BJ (cell line): ENCODE measurements at regions of chr6 and their contacts with region 1.

Region 1: GRCh38 chr6:166775180-166776081 is 148.4 kb upstream of the RPS6KA2 start:
- DNase-seq: no peak
- H3K4me3 ChIP-seq: no peak overlapping the region
- H3K27me3 ChIP-seq: no peaks in the 10 kb centered on the region; the same call in 1 of the 2 replicates
- CTCF ChIP-seq: peak; percentile 95

Region 2: DNA sequence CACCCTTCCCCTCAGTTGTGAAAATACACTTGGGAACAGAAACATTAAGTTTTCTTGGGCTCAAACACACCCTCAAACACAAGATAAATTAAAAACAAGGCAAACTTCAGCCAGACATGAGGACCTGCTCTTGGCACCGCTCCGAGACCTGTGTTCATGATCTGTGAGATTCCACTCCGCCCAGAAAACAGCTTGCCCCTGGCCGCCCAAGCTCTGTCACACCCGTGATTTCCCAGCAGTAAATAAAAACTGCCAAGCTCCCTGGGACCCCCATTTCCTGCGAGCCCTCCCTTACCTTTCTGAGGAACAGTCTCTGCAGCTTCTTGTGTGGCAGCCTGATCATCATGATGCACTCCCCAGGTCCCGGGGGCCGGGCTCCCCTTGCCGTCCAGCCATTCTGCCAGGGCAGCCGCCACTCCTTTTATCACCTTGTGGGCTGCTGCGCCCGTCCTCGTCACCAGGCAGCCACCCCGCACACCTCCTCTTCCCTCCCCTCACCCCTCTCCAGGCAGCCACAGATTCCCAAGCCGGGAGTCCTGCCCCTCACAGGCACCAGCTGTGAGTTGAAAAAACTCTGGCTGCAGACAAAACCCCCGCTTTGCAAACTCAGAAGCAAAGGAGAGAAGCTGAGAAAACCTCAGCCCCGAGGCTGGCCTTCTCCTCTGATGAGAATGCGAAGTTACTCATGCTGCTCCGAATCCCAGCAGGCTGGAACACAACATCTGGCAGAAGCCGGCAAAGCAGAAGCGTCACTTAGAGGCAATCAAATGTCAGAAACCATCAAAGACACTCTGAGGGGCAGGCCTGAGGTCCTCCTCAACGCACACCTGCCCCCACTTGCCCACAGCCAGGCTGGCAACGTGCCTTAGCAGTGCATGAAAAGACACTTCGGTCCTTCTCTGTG is 17.9 kb before region 1 on chr6:
- CTCF ChIA-PET with region 1: interaction called, 11 read pairs
- POLR2A ChIA-PET with region 1: no interaction called
- DNase-seq: no peak
- H3K4me3 ChIP-seq: no peak overlapping the region
- H3K27me3 ChIP-seq: peaks cover 5% of the 10 kb centered on the region; the same call in 1 of the 2 replicates
- CTCF ChIP-seq: no peak